MCF 10A (cell line): ENCODE measurements at regions of chr1 and their contacts with region 1.

Region 1: GRCh38 chr1:231590453-231591198 is 36.0 kb upstream of the DISC1 start:
- DNase-seq: peak; percentile 85
- H3K4me3 Mint-ChIP-seq: no peak overlapping the region
- H3K27ac Mint-ChIP-seq: no peak overlapping the region
- H3K4me1 Mint-ChIP-seq: peaks cover 8% of the 10 kb centered on the region
- H3K27me3 Mint-ChIP-seq: no peaks in the 10 kb centered on the region
- CTCF ChIP-seq: peak; percentile 96

Region 2: GRCh38 chr1:231240883-231241735 is 349.5 kb before region 1 on chr1 and contains the start of gene GNPAT:
- CTCF ChIA-PET with region 1: interaction called, 3 read pairs
- POLR2A ChIA-PET with region 1: interaction called, 3 read pairs
- intact Hi-C with region 1: loop called (anchors 1 kb)
- DNase-seq: peak; percentile 95
- H3K4me3 Mint-ChIP-seq: peak within 1 kb of the TSS; percentile 85
- H3K27ac Mint-ChIP-seq: peak within 1 kb of the TSS; percentile 97
- H3K4me1 Mint-ChIP-seq: peaks cover 50% of the 10 kb centered on the region
- H3K27me3 Mint-ChIP-seq: no peaks in the 10 kb centered on the region
- CTCF ChIP-seq: no peak
- total RNA-seq, gene GNPAT: 60.9 and 64.4 TPM in 2 replicates

Region 3: DNA sequence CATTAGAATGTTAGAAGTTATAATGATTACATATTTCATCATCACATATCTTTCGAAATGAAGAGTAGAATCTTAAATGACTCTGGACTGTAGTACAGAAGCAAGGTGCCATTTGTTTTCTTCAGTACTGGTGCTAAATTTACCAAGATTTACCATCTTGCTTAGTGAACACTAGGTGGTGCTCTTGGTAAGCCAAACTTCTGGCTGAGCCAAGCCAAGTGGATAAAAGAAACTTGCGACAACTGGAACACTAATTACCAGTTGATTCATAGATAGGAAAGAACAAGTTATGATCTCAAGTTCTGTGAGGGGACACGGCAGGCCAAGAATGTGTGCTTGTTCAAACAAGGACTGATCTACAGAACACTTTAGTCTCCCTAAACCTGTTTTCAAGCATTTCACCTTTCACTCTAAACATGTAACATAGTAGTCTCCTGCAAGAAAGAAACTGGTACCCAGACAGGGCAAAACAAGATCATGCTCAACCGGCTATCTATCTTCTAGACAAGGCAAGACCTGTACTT is 232.7 kb before region 1 on chr1:
- CTCF ChIA-PET with region 1: interaction called, 51 read pairs
- POLR2A ChIA-PET with region 1: interaction called, 6 read pairs
- intact Hi-C with region 1: loop called (anchors 1 kb)
- DNase-seq: peak; percentile 88
- H3K4me3 Mint-ChIP-seq: no peak overlapping the region
- H3K27ac Mint-ChIP-seq: no peak overlapping the region
- H3K4me1 Mint-ChIP-seq: peaks cover 17% of the 10 kb centered on the region
- H3K27me3 Mint-ChIP-seq: no peaks in the 10 kb centered on the region
- CTCF ChIP-seq: peak; percentile 96

Region 4: DNA sequence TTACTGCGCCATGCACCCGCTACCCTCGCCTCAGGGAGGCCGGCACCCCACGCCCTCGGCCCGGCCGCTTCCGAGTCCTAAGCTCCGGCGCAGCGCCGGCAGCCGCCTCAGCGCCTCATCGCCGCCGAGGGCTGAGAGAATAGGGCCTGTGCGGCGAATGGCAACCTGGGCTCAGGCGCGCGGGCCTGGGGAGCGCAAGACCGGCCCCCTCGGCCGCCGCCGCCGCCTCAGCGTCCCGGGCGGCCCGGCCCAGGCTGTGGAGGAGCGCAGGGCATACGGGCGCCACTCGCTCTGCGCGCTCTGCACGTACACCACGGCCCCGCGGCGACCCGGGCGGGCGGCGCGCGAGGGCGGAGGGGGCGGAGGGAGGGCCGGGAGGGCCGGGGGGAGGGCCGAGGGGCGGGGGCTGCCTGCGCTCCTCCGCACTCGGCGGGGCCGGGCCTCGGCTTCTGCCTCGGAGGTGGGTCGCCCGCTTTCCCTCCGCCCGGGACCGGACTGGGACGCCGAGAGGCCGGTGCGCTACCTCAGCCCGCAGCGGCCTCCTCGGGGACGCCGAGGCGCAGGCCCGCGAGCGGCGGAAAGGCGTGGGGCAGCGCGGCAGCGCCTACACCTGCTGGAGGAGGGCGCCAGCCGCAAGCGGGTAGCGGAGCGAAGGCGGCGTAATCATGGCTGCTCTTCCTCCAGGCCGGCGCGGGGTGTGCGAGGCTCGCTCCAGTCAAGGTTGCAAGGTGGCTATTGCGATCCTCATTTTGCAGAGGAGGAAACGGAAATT is 168.4 kb before region 1 on chr1 and contains the start of gene EGLN1:
- CTCF ChIA-PET with region 1: interaction called, 8 read pairs
- POLR2A ChIA-PET with region 1: interaction called, 3 read pairs
- intact Hi-C with region 1: loop called (anchors 1 kb)
- DNase-seq: peak; percentile 95
- H3K4me3 Mint-ChIP-seq: peak within 1 kb of the TSS; percentile 82
- H3K27ac Mint-ChIP-seq: peak within 1 kb of the TSS; percentile 87
- H3K4me1 Mint-ChIP-seq: peaks cover 34% of the 10 kb centered on the region
- H3K27me3 Mint-ChIP-seq: no peaks in the 10 kb centered on the region
- CTCF ChIP-seq: peak; percentile 43
- total RNA-seq, gene EGLN1: 67.3 and 68.8 TPM in 2 replicates

Region 5: GRCh38 chr1:231550448-231550781 is 40.2 kb before region 1 on chr1:
- CTCF ChIA-PET with region 1: interaction called, 14 read pairs
- POLR2A ChIA-PET with region 1: no interaction called
- intact Hi-C with region 1: no loop called
- DNase-seq: peak; percentile 60
- H3K4me3 Mint-ChIP-seq: no peak overlapping the region
- H3K27ac Mint-ChIP-seq: no peak overlapping the region
- H3K4me1 Mint-ChIP-seq: peaks cover 16% of the 10 kb centered on the region
- H3K27me3 Mint-ChIP-seq: no peaks in the 10 kb centered on the region
- CTCF ChIP-seq: peak; percentile 46

Region 6: GRCh38 chr1:231603598-231604275 is 13.1 kb after region 1 on chr1:
- CTCF ChIA-PET with region 1: interaction called, 87 read pairs
- POLR2A ChIA-PET with region 1: interaction called, 3 read pairs
- intact Hi-C with region 1: no loop called
- DNase-seq: peak; percentile 84
- H3K4me3 Mint-ChIP-seq: peak overlapping the region; percentile 84
- H3K27ac Mint-ChIP-seq: peak overlapping the region; percentile 66
- H3K4me1 Mint-ChIP-seq: peaks cover 12% of the 10 kb centered on the region
- H3K27me3 Mint-ChIP-seq: peaks cover 26% of the 10 kb centered on the region
- CTCF ChIP-seq: peak; percentile 91